ENCODE measurements at regions of chr5 and their contacts with region 1.

Region 1: GRCh38 chr5:43484106-43484849 is 613 bp upstream of the TMEM267 start:
- DNase-seq: peak; percentile 43
- H3K4me3 ChIP-seq: peak overlapping the region; percentile 94
- H3K27me3 ChIP-seq: no peaks in the 10 kb centered on the region
- CTCF ChIP-seq: peak; percentile 81

Region 2: DNA sequence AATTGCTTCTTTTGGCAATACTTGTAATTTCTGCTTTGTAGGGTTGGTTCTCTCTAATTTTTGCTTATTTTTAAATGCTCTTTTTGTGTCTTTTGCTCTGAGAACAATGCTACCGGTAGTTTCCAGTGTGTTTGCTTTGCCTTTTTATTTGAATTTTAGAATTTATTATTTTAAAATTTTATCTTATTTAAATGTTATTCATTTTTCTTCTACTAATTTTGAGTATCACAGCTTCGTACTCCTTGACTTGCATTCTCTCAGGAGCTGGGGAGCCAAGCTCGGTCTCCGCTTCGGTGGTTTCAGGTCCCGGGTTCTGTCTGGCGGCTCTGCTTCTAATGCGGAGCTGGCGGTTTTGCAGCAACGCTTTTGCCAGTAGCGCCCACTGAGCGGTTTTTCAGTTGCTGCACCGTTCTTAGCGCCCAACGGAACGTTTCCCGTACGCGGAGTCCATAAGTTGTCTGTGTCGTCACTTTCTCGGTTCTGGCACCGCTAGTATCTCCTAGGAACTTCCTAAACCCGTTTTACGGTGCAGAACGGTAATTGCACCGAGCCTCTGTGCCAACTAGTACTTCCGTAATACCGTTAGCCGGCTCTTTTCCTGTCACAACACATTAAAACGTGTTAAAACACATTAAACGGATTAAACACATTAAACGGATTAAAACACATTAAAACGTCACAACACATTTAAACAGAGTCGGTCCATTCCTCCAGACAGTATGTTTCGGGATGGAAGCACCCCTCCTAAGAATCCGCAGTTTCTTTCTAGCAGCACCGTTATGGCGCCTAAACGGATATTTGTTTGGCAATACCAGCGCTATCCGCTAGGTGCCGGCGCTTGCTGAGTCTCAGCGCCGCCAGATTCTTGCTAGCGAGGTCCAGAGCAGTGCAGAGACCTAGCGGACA is 489.8 kb before region 1 on chr5:
- CTCF ChIA-PET with region 1: no interaction called
- POLR2A ChIA-PET with region 1: interaction called, 20 read pairs
- DNase-seq: peak; percentile 52
- H3K4me3 ChIP-seq: peak overlapping the region; percentile 36
- H3K27me3 ChIP-seq: no peaks in the 10 kb centered on the region
- CTCF ChIP-seq: peak; percentile 84

Region 3: DNA sequence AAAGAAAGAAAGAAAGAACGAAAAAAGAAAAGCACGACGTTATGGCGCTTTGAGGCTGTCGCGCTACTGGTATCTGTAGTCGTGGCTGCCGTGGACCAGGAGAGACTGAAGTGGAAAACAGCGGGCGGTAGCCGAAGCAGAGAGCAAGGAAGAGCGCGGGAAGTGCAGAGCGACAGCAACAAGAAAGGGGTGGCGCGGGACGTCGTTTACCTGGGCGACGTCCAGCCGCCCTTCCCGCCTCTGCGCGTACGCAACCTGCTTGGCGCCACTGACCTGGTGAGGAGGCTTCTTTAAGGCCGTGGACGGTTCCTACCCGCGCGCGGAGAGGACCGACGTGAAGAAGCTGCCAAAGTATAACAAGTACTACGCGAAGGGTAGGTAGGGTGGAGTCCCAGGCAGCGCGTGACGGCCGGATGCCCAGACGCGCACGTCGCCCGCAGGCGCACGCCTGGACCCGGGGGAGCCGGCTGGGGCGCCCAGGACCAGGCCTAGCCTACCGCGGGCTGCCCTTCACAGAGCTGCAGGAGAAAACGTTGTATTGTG is 87.4 kb before region 1 on chr5:
- CTCF ChIA-PET with region 1: interaction called, 21 read pairs
- POLR2A ChIA-PET with region 1: no interaction called
- DNase-seq: no peak
- H3K4me3 ChIP-seq: peak overlapping the region; percentile 56
- H3K27me3 ChIP-seq: 0 out of 2 replicates have a peak, but pooled peaks cover 1% of the 10 kb centered on the region
- CTCF ChIP-seq: no peak

Region 4: DNA sequence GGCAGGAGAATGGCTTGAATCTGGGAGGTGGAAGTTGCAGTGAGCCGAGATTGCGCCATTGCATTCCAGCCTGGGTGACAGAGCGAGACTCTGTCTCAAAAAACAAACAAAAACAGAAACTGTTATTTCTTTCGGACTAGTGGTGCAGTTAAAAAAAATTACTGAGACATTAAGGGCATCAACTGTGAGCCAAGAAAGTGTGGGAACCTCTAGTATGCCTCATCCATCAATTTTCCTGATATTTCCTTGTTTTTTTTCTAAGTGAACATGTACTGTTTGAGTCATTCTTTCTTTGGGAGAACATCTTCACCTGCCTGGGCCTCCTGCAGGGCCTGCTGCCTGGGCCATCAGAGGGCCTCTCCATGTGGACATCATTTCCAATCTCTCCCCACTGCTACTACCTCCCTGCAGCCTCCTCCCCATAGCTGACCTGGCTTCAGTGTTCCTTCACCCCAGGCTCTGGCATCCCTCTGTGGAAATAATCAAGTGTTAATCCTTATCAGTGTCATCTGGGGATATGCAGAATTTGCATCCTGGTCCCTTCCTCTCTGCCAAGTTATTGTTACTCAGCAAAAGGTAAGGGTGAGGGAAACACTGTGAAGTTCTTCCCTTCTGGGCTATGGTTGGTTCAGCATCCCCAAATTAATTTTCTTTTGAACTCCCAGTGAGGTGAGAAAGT is 56.1 kb before region 1 on chr5:
- CTCF ChIA-PET with region 1: interaction called, 13 read pairs
- POLR2A ChIA-PET with region 1: no interaction called
- DNase-seq: no peak
- H3K4me3 ChIP-seq: no peak overlapping the region
- H3K27me3 ChIP-seq: no peaks in the 10 kb centered on the region
- CTCF ChIP-seq: no peak

Region 5: GRCh38 chr5:43461066-43461465 is 23.2 kb before region 1 on chr5:
- CTCF ChIA-PET with region 1: no interaction called
- POLR2A ChIA-PET with region 1: no interaction called
- DNase-seq: no peak
- H3K4me3 ChIP-seq: no peak overlapping the region
- H3K27me3 ChIP-seq: no peaks in the 10 kb centered on the region
- CTCF ChIP-seq: no peak

Region 6: GRCh38 chr5:43661102-43661501 is 176.8 kb after region 1 on chr5:
- CTCF ChIA-PET with region 1: no interaction called
- POLR2A ChIA-PET with region 1: no interaction called
- DNase-seq: no peak
- H3K4me3 ChIP-seq: no peak overlapping the region
- H3K27me3 ChIP-seq: no peaks in the 10 kb centered on the region
- CTCF ChIP-seq: peak; percentile 44